Lower leg skin (tissue), 4 donors: ENCODE measurements at regions of chr6 and their contacts with region 1.

Region 1: DNA sequence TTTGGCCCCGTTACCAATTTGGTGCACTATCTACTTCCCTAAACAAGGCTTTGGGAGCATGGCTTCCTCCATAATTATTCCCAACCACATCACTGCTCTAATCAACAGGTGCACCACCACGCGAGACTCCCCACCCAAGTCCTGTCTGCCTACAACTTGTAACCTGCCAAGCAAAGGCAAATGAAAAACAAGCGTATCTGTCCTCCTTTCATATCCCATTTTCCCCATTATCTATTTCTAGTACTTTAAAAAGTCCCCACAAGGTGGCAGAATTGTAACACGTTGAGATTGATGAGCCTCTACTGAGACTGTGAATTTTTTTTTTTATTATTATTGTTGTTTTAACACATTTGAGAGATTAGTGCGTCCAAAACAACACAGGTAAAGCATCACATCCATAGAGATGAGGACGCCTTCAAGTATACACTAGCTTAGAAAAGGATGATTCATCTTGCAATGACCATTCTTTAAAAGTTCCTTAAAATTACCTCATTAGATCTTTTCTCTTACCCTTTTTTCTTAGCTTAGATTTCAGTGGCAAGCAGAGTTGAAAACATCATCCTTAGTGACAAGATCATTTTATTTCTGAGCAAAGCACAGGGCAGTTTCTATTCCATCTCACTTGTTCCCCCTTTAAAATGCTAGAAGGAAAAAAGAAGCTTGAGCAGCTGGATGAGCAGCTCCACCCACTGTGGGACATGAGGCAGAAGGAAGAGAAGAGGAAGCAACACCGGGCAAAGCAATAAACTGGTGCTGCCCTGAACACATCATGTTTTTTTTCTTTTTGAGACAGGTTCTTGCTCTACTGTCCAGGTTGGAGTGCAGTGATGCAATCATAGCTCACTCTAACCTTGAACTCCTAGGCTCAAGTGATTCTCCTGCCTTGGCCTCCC is 210.8 kb downstream of the ARHGAP18 start:
- DNase-seq: no peak
- H3K4me3 ChIP-seq: no peak overlapping the region
- CTCF ChIP-seq: peak in 1 of 3 donors; percentile 38
- POLR2A ChIP-seq: no peak

Region 2: GRCh38 chr6:129146902-129147301 is 352.3 kb before region 1 on chr6:
- intact Hi-C with region 1: no loop called
- DNase-seq: no peak
- H3K4me3 ChIP-seq: no peak overlapping the region
- CTCF ChIP-seq: no peak
- POLR2A ChIP-seq: no peak

Region 3: DNA sequence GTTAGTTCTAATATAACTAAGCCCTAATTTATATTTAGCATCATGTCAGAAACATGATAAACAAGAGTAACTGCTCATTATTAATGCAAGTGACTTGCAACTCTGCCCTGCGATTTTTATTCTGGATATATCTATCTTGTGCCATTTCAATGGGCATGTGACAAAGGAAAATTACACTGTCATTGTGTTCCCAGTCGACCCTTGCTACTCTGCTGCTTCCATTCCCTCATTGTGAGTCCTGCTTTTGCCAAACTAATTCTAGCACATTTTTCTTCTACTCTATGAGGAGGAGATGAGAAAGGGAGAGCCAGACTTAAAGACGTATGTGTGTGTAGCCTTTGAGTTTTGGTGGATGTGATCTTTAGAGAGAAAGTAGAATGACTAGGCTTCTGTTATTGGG is 65.1 kb before region 1 on chr6:
- intact Hi-C with region 1: loop called (anchors 2 kb)
- DNase-seq: no peak
- H3K4me3 ChIP-seq: no peak overlapping the region
- CTCF ChIP-seq: no peak
- POLR2A ChIP-seq: no peak

Region 4: DNA sequence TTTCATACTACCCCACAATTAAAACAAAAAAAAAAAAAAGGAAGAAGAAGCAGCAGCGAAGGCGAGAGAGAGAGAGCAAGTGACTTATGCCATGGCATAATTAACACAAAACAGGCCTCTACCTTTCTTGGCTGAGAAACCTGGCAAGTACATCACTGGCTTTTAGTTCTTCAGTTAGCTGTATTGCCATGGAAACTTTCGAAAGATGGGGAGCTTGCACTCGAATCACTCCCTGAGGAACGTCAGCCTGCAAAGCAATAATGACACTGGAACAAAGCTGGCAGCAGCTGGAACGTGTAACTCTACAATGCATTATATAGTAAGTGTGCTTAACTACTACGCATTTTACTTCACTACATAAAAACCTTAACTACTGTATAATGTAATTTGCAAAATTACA is 84.7 kb after region 1 on chr6:
- intact Hi-C with region 1: loop called (anchors 5 kb)
- DNase-seq: no peak
- H3K4me3 ChIP-seq: no peak overlapping the region
- CTCF ChIP-seq: no peak
- POLR2A ChIP-seq: no peak